Dorsolateral prefrontal cortex (tissue), 120 donors: ENCODE measurements at regions of chr17 and their contacts with region 1.

Region 1: DNA sequence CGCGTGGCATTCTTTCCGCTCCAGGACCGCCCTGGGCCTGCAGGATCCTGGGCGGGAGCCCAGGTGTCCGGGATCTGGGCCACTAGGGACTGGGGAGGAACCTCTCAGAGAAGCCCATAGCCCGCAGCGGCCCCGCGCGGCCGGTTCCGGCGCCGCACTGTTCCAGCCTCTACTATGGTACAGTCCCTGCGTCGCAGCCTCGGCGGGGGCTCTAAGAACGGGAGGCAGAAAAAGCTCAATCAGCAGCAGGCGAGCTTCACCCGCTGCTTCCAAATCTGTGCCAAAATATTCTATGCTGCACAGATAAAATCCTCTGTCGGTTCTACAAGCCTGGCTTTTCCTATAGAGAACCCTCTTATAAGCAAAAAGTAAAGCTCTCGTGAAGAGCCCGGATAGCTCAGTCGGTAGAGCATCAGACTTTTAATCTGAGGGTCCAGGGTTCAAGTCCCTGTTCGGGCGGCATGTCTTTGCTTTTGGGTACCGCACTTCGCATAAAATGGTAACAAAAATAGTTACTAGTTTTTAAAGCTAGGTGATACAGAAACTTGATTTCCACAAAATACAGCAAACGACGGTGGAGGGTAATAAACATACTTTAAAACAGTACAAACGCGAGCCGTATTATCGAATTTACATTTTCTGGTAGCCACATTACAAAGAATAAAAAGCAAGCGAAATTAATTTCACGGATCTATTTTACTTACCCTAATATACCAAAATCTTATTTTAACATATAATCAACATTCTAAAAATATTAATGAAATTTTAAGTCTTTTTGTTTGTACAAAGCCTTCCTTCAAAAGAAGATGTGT is 661 bp upstream of the ALOXE3 start:
- DNase-seq: peak; percentile 90 to 95 (median 92)
- H3K4me3 ChIP-seq: peak overlapping the region; percentile 39 to 88 (median 75)
- H3K27ac ChIP-seq: peak overlapping the region; percentile 64 to 98 (median 92)
- H3K27me3 ChIP-seq: peaks cover 0 to 3% (median 0%) of the 10 kb centered on the region in 45 donors
- CTCF ChIP-seq: peak; percentile 78 to 98 (median 92)

Region 2: GRCh38 chr17:8079291-8080207 is 39.4 kb before region 1 on chr17:
- intact Hi-C with region 1: loop called (anchors 5 kb)
- DNase-seq: peak in 8 of 10 donors; percentile 61 to 83 (median 70)
- H3K4me3 ChIP-seq: peak overlapping the region; percentile 13 to 73 (median 58)
- H3K27ac ChIP-seq: peak overlapping the region in 11 of 59 donors; percentile 13 to 66 (median 28)
- H3K27me3 ChIP-seq: peaks cover 0 to 63% (median 33%) of the 10 kb centered on the region in 45 donors
- CTCF ChIP-seq: peak; percentile 62 to 93 (median 86)

Region 3: DNA sequence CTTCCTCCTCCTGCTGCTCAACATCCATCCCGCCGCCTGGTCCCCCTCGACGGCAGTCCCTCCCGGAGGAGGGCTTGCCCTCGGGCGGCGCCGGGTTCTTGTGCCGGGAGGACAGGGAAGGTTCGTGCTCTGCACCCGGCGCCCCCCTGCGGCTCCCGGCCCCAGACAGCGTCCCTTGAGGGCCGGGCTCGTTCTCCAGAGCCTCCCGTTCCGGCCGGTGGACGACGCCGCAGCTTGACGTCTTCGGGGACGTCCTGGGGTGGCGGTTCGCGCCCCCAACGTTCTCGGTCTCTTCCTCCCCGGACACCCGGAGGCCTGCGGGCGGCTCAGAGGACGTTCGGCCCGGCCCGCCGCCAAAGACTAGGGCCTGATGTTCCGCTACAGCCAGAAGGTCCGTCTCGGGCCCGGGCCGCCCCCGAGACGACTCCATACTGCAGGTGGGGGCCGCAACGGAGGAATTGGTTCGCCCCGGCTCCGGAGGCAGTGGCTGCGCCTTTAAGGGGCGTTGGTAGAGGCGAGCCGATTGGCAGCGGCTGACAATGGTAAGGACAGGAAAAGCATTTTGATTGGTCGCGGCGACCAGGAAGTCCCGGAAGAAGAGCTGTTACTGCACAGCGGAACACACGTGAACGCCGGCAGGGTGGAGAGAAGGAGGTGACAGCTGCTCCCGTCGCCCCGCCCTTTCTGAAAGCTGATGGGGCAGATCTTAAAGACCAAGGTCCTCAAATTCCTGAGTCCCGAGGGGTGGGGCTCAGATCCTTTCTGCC is 70.9 kb after region 1 on chr17 and contains the start of gene BORCS6:
- intact Hi-C with region 1: loop called (anchors 1 to 2 kb)
- DNase-seq: peak; percentile 97 to 100 (median 99)
- H3K4me3 ChIP-seq: peak within 1 kb of the TSS; percentile 62 to 99 (median 91)
- H3K27ac ChIP-seq: peak within 1 kb of the TSS; percentile 90 to 100 (median 98)
- H3K27me3 ChIP-seq: no peaks in the 10 kb centered on the region
- CTCF ChIP-seq: peak in 26 of 56 donors; percentile 1 to 53 (median 23)
- total RNA-seq, gene BORCS6: 5.2 to 10.9 (median 8.0) TPM

Region 4: GRCh38 chr17:8248751-8249607 is 130.0 kb after region 1 on chr17 and contains the start of gene PFAS:
- intact Hi-C with region 1: loop called in 1 of 2 experiments (anchors 2 kb)
- DNase-seq: peak; percentile 91 to 96 (median 95)
- H3K4me3 ChIP-seq: peak within 1 kb of the TSS; percentile 66 to 99 (median 87)
- H3K27ac ChIP-seq: peak within 1 kb of the TSS; percentile 87 to 100 (median 97)
- H3K27me3 ChIP-seq: no peaks in the 10 kb centered on the region
- CTCF ChIP-seq: peak in 28 of 56 donors; percentile 1 to 56 (median 23)
- total RNA-seq, gene PFAS: 20.3 to 49.9 (median 35.2) TPM

Region 5: GRCh38 chr17:8268550-8269298 is 149.7 kb after region 1 on chr17:
- intact Hi-C with region 1: no loop called
- DNase-seq: no peak
- H3K4me3 ChIP-seq: no peak overlapping the region
- H3K27ac ChIP-seq: no peak overlapping the region
- H3K27me3 ChIP-seq: no peaks in the 10 kb centered on the region
- CTCF ChIP-seq: no peak